AG04449 (cell line): ENCODE measurements at regions of chr15 and their contacts with region 1.

Region 1: GRCh38 chr15:69413822-69414700 is at the start of gene KIF23:
- DNase-seq: peak; percentile 67
- H3K4me3 ChIP-seq: peak within 1 kb of the TSS; percentile 98
- CTCF ChIP-seq: no peak

Region 2: GRCh38 chr15:69185706-69186105 is 228.4 kb before region 1 on chr15:
- CTCF ChIA-PET with region 1: no interaction called
- POLR2A ChIA-PET with region 1: no interaction called
- DNase-seq: no peak
- H3K4me3 ChIP-seq: no peak overlapping the region
- CTCF ChIP-seq: no peak

Region 3: DNA sequence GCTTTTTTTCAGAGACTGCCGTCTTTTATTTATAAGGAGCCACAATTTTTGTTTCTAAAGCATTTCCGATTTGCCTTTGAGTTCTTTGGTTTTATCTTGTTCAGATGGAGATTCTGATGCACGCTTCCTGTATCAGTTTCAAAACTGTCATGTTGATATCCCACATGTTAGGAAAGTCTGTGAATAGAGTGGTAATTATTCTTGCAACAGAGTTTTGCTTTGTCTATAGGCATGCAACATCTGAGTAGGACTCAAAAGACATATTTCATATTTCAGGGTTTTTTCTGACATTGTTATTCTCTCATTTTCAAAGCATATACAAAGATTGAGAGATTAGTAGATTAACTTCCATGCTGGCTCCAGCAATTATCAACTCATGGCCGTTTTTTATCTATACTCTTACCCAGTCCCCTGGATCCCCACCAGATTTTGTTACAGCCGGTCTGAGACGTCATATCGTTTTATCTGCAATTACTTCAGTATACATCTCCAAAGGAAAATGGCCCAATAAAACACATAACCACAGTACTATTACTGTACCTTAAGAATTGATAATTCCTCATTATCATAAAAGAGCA is 93.0 kb before region 1 on chr15:
- CTCF ChIA-PET with region 1: no interaction called
- POLR2A ChIA-PET with region 1: no interaction called
- DNase-seq: no peak
- H3K4me3 ChIP-seq: no peak overlapping the region
- CTCF ChIP-seq: no peak

Region 4: DNA sequence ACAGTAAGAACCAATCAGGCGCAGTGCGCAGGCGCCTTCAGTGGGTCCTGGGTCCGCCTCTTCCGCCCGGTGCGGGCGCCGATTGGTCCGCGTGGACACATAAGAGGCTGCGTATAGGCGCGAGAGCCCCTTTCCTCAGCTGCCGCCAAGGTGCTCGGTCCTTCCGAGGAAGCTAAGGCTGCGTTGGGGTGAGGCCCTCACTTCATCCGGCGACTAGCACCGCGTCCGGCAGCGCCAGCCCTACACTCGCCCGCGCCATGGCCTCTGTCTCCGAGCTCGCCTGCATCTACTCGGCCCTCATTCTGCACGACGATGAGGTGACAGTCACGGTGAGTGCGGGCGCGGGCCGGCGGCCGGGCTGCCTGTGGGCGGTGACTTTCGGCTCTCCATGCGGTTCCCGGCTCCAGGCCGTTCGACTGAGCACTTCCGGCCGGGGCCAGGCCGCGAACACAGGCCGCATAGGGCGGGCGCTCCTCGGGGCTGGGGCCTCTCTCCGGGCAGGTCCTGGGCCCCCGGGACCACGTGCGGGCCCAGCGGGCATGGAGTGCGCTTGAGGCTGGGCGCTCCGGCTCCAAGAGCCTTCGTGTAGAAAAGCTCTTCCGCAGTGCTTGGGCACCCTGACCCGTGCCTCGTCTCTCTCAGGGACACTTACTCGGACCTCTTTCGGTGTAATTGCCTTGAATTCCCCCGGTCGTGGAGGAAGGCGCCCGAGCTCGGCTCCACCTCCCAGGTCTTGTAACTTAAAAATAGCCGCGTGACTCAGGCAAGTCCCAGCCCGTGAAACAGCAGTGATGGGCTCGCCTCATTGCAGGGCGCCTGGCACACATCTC is 38.8 kb after region 1 on chr15 and contains the start of gene RPLP1:
- CTCF ChIA-PET with region 1: interaction called, 3 read pairs
- POLR2A ChIA-PET with region 1: interaction called, 23 read pairs
- DNase-seq: peak; percentile 67
- H3K4me3 ChIP-seq: peak within 1 kb of the TSS; percentile 92
- CTCF ChIP-seq: no peak